ENCODE measurements at regions of chr12 and their contacts with region 1.

Region 1: DNA sequence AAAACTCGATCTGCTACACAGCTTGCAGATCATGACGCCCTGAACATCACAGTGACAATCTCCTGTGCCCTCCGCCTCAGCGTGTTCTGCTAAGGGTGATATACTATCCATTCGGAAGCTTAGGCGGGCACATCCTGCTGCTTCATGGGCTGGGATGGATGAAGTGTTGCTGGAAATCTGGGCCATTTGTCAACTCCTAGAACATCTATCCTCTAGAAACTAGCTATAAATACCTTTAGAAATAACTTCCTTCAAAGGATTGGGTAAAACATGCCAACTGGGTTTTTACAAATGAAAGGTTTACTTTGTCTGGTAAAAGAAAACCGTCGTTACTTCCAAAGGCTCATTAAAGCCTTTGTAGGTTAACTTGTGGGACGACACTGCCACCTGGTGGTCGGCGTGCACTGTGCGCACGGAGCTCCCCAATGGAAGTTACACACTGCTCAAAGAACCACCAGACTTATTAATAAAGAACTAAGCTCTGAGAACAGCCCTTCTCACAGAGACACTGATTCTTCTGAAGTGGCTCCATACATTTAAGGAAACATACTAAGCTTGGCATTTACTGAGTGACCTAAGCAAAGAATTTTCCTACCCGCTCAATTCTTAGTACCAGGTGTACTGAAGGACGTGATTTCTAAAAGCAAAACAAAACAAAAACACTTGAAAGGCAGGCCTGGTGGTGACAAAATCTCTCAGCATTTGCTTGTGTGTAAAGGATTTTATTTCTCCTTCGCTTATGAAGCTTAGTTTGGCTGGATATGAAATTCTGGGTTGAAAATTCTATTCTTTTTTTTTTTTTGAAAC is 21.6 kb upstream of the CACNA2D4 start:
- DNase-seq: peak; percentile 85 to 94
- ATAC-seq: peak; percentile 95 to 100 (median 99)
- H3K4me3 ChIP-seq: no peak overlapping the region
- H3K4me3 Mint-ChIP-seq: no peak overlapping the region
- H3K27ac ChIP-seq: no peak overlapping the region
- H3K27ac Mint-ChIP-seq: no peak overlapping the region
- H3K4me1 ChIP-seq: peaks cover 5% of the 10 kb centered on the region
- H3K4me1 Mint-ChIP-seq: peaks cover 5% of the 10 kb centered on the region in 2 donors
- H3K27me3 ChIP-seq: no peaks in the 10 kb centered on the region
- H3K27me3 Mint-ChIP-seq: peaks cover 0 to 2% of the 10 kb centered on the region in 2 donors
- CTCF ChIP-seq: peak; percentile 95

Region 2: GRCh38 chr12:1634590-1635191 is 305.3 kb before region 1 on chr12:
- intact Hi-C with region 1: loop called (anchors 1 kb)
- DNase-seq: peak; percentile 45 to 76
- ATAC-seq: peak; percentile 73 to 80 (median 80)
- H3K4me3 ChIP-seq: no peak overlapping the region
- H3K4me3 Mint-ChIP-seq: no peak overlapping the region
- H3K27ac ChIP-seq: no peak overlapping the region
- H3K27ac Mint-ChIP-seq: no peak overlapping the region
- H3K4me1 ChIP-seq: peaks cover 15% of the 10 kb centered on the region
- H3K4me1 Mint-ChIP-seq: peaks cover 0 to 14% of the 10 kb centered on the region in 2 donors
- H3K27me3 ChIP-seq: peaks cover 17% of the 10 kb centered on the region
- H3K27me3 Mint-ChIP-seq: peaks cover 35 to 55% of the 10 kb centered on the region in 2 donors
- CTCF ChIP-seq: peak; percentile 63

Region 3: GRCh38 chr12:1651946-1652345 is 288.1 kb before region 1 on chr12:
- intact Hi-C with region 1: loop called (anchors 1 kb)
- DNase-seq: no peak
- ATAC-seq: no peak
- H3K4me3 ChIP-seq: no peak overlapping the region
- H3K4me3 Mint-ChIP-seq: no peak overlapping the region
- H3K27ac ChIP-seq: no peak overlapping the region
- H3K27ac Mint-ChIP-seq: no peak overlapping the region
- H3K4me1 ChIP-seq: peaks cover under 1% of the 10 kb centered on the region
- H3K4me1 Mint-ChIP-seq: no peaks in the 10 kb centered on the region
- H3K27me3 ChIP-seq: no peaks in the 10 kb centered on the region
- H3K27me3 Mint-ChIP-seq: peaks cover 12 to 17% of the 10 kb centered on the region in 2 donors
- CTCF ChIP-seq: no peak

Region 4: DNA sequence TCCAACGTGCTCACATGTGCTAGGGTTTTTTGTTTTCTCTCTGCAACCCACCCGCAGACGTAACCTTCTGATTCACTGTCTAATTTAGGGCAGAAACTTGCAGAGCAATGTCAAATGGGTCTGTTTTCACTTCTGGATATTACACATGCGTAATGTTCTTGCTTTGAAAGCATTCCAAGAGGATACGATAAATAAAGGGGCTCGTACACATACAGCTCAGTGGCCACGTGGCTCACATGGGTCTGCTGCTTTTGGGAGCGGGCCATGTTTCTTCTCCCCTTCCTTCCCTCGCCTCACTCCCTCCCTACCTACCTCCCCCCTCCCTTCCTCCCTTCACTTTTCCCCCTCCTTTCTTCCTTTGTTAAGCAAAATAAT is 136.2 kb after region 1 on chr12:
- intact Hi-C with region 1: no loop called
- DNase-seq: no peak
- ATAC-seq: no peak
- H3K4me3 ChIP-seq: no peak overlapping the region
- H3K4me3 Mint-ChIP-seq: no peak overlapping the region
- H3K27ac ChIP-seq: no peak overlapping the region
- H3K27ac Mint-ChIP-seq: no peak overlapping the region
- H3K4me1 ChIP-seq: no peaks in the 10 kb centered on the region
- H3K4me1 Mint-ChIP-seq: peaks cover 0 to 2% of the 10 kb centered on the region in 2 donors
- H3K27me3 ChIP-seq: no peaks in the 10 kb centered on the region
- H3K27me3 Mint-ChIP-seq: peaks cover 5 to 8% of the 10 kb centered on the region in 2 donors
- CTCF ChIP-seq: no peak